Activated CD4-positive, alpha-beta memory T cell treated with anti-CD3 and anti-CD28 coated beads, Interleukin-2, amount 10 ng/mL, durations not matched to agents 7 days and 5 days (primary cell): ENCODE measurements at regions of chr7 and their contacts with region 1.

Region 1: GRCh38 chr7:130961128-130961601 is 227.2 kb upstream of the KLF14 start:
- DNase-seq: peak; percentile 86
- H3K4me3 Mint-ChIP-seq: peak overlapping the region; percentile 93
- H3K27ac Mint-ChIP-seq: peak overlapping the region; percentile 100
- H3K4me1 Mint-ChIP-seq: peaks cover 54% of the 10 kb centered on the region
- H3K27me3 Mint-ChIP-seq: no peaks in the 10 kb centered on the region

Region 2: GRCh38 chr7:130904031-130904757 is 57.0 kb before region 1 on chr7:
- CTCF ChIA-PET with region 1: interaction called, 7 read pairs
- POLR2A ChIA-PET with region 1: interaction called, 13 read pairs
- DNase-seq: no peak
- H3K4me3 Mint-ChIP-seq: no peak overlapping the region
- H3K27ac Mint-ChIP-seq: peak overlapping the region; percentile 71
- H3K4me1 Mint-ChIP-seq: peaks cover 84% of the 10 kb centered on the region
- H3K27me3 Mint-ChIP-seq: no peaks in the 10 kb centered on the region

Region 3: DNA sequence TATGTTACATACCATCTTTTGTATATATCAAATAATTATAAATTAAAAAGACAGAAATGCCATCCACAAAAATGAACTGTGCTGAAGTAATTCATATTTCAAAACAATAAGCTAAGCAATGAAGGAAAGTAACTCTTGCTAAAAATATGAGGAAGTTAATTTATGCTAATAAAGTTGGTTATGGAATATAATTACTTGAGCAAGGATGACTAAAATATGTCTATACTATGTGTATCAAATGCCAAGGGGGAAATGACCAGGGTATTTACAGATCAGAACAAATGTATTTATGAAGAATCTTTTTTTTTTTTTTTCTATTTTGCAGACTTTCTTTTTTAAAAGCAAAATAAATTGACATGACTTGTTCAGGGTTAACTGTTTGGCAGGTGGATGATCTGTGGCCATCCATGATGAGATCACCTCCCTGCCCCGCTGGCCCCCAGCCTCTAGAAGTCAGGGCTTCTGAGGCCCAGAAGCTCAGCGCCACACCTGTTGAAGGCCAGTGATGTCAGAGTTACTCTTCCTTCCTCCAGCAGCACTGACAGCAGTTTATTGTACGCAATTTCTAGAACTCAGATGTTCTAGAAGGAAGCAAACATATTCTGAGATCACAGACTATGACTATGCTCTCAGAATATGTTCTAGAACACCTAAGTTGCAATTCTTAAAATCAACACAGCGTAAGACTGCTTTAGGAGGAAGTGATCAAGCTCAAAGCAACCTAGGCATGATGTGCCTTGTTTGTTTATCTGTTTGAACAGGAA is 31.1 kb before region 1 on chr7:
- CTCF ChIA-PET with region 1: interaction called, 7 read pairs
- POLR2A ChIA-PET with region 1: interaction called, 294 read pairs
- DNase-seq: no peak
- H3K4me3 Mint-ChIP-seq: no peak overlapping the region
- H3K27ac Mint-ChIP-seq: peak overlapping the region; percentile 84
- H3K4me1 Mint-ChIP-seq: peaks cover 92% of the 10 kb centered on the region
- H3K27me3 Mint-ChIP-seq: no peaks in the 10 kb centered on the region

Region 4: GRCh38 chr7:130982160-130982638 is 21.0 kb after region 1 on chr7:
- CTCF ChIA-PET with region 1: interaction called, 33 read pairs
- POLR2A ChIA-PET with region 1: interaction called, 38 read pairs
- DNase-seq: no peak
- H3K4me3 Mint-ChIP-seq: no peak overlapping the region
- H3K27ac Mint-ChIP-seq: no peak overlapping the region
- H3K4me1 Mint-ChIP-seq: peaks cover 46% of the 10 kb centered on the region
- H3K27me3 Mint-ChIP-seq: no peaks in the 10 kb centered on the region

Region 5: GRCh38 chr7:130996841-130997231 is 35.7 kb after region 1 on chr7:
- CTCF ChIA-PET with region 1: interaction called, 8 read pairs
- POLR2A ChIA-PET with region 1: interaction called, 74 read pairs
- DNase-seq: no peak
- H3K4me3 Mint-ChIP-seq: peak overlapping the region; percentile 51
- H3K27ac Mint-ChIP-seq: peak overlapping the region; percentile 85
- H3K4me1 Mint-ChIP-seq: peaks cover 78% of the 10 kb centered on the region
- H3K27me3 Mint-ChIP-seq: no peaks in the 10 kb centered on the region

Region 6: DNA sequence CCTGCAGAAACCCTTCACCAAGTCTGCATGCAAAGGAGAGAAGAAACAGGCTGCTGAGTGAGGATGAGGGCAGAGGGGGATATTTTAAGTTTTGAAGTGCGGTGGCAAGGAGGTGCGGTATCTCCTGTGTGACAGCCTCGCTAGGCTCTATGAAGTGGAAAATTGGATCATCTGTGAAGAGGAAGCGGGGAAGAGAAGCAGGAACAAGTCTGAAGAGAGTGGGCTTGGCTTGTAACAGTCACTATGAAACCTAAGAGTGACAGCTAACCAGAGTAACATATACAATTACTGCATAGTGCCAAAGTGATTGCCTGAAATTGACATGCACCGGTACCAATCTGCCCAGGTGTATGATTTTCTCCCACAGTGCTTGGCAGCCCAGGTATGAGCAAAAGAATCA is 60.3 kb after region 1 on chr7:
- CTCF ChIA-PET with region 1: interaction called, 3 read pairs
- POLR2A ChIA-PET with region 1: interaction called, 45 read pairs
- DNase-seq: no peak
- H3K4me3 Mint-ChIP-seq: peak overlapping the region; percentile 57
- H3K27ac Mint-ChIP-seq: peak overlapping the region; percentile 82
- H3K4me1 Mint-ChIP-seq: peaks cover 78% of the 10 kb centered on the region
- H3K27me3 Mint-ChIP-seq: no peaks in the 10 kb centered on the region

Region 7: GRCh38 chr7:131107337-131108211 is 146.4 kb after region 1 on chr7:
- CTCF ChIA-PET with region 1: no interaction called
- POLR2A ChIA-PET with region 1: interaction called, 54 read pairs
- DNase-seq: peak; percentile 83
- H3K4me3 Mint-ChIP-seq: peak overlapping the region; percentile 98
- H3K27ac Mint-ChIP-seq: peak overlapping the region; percentile 98
- H3K4me1 Mint-ChIP-seq: peaks cover 60% of the 10 kb centered on the region
- H3K27me3 Mint-ChIP-seq: no peaks in the 10 kb centered on the region